ENCODE measurements at regions of chr3 and their contacts with region 1.

Region 1: GRCh38 chr3:132722164-132723024 is at the start of gene NPHP3:
- DNase-seq: peak; percentile 96
- H3K4me3 Mint-ChIP-seq: peak within 1 kb of the TSS; percentile 96
- H3K27ac Mint-ChIP-seq: peak within 1 kb of the TSS; percentile 88
- H3K4me1 Mint-ChIP-seq: peaks cover 30% of the 10 kb centered on the region
- H3K27me3 Mint-ChIP-seq: peaks cover 3% of the 10 kb centered on the region
- total RNA-seq, gene NPHP3: 13.4 and 16.8 TPM in 2 replicates

Region 2: DNA sequence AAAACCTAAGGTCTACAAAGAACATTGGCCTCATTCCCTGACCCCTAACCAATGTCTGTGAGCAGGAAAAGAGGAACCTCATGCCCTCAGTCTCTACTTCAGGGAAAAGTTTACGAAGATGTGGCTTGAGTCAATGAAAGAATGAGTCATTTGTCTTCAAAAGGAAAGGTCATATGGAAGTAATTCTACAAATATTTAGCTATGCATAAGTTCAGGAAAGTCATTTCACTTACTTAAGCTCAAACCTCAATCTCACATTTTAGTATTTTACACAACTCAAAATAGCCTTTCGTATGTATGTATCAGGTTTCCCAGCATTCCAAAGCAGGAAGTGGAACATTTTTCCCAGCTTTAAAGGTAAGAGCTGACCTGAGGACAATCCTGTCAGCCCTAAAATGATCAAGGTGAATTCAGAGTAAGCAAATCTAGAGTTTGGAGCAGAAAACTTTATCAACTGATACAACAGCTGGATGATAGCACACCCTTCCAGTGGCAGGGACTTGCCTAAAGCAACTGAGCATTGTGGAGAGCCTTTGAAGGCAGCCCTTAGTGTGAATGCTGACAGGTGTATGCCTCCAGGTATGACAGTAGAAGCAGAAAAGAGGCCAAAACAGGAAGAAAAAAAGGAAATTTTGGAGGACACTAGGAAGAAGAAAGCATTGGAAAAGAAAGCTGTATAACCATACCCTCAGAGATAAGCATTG is 179.2 kb before region 1 on chr3:
- intact Hi-C with region 1: loop called (anchors 5 kb)
- DNase-seq: no peak
- H3K4me3 Mint-ChIP-seq: peak overlapping the region; percentile 62
- H3K27ac Mint-ChIP-seq: peak overlapping the region; percentile 97
- H3K4me1 Mint-ChIP-seq: peaks cover 33% of the 10 kb centered on the region
- H3K27me3 Mint-ChIP-seq: no peaks in the 10 kb centered on the region

Region 3: DNA sequence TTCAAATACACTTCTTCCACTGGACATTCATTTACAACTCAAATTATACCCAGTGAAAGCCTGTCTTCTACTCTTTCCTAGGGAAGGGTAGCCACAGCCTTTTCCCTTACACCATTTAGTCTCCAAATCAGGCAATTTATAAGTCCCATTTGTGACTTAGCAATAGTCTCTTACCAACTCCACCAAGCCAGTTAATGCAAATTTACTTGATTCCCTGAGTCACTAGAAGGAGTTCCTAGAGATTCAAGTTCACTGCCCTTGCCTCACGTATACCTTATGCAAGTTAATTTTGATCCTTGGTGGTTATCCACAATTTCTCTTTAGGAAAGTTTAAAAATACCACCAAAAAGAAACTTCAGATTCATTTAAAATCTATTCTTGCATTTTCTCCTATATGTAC is 15.9 kb after region 1 on chr3:
- intact Hi-C with region 1: no loop called
- DNase-seq: no peak
- H3K4me3 Mint-ChIP-seq: no peak overlapping the region
- H3K27ac Mint-ChIP-seq: no peak overlapping the region
- H3K4me1 Mint-ChIP-seq: no peaks in the 10 kb centered on the region
- H3K27me3 Mint-ChIP-seq: peaks cover 37% of the 10 kb centered on the region

Region 4: GRCh38 chr3:133040696-133041523 is 318.5 kb after region 1 on chr3:
- intact Hi-C with region 1: loop called (anchors 5 kb)
- DNase-seq: peak; percentile 69
- H3K4me3 Mint-ChIP-seq: no peak overlapping the region
- H3K27ac Mint-ChIP-seq: no peak overlapping the region
- H3K4me1 Mint-ChIP-seq: no peaks in the 10 kb centered on the region
- H3K27me3 Mint-ChIP-seq: peaks cover 35% of the 10 kb centered on the region

Region 5: GRCh38 chr3:133426721-133427120 is 704.3 kb after region 1 on chr3:
- intact Hi-C with region 1: loop called (anchors 1 kb)
- DNase-seq: no peak
- H3K4me3 Mint-ChIP-seq: no peak overlapping the region
- H3K27ac Mint-ChIP-seq: no peak overlapping the region
- H3K4me1 Mint-ChIP-seq: peaks cover 5% of the 10 kb centered on the region
- H3K27me3 Mint-ChIP-seq: no peaks in the 10 kb centered on the region

Region 6: DNA sequence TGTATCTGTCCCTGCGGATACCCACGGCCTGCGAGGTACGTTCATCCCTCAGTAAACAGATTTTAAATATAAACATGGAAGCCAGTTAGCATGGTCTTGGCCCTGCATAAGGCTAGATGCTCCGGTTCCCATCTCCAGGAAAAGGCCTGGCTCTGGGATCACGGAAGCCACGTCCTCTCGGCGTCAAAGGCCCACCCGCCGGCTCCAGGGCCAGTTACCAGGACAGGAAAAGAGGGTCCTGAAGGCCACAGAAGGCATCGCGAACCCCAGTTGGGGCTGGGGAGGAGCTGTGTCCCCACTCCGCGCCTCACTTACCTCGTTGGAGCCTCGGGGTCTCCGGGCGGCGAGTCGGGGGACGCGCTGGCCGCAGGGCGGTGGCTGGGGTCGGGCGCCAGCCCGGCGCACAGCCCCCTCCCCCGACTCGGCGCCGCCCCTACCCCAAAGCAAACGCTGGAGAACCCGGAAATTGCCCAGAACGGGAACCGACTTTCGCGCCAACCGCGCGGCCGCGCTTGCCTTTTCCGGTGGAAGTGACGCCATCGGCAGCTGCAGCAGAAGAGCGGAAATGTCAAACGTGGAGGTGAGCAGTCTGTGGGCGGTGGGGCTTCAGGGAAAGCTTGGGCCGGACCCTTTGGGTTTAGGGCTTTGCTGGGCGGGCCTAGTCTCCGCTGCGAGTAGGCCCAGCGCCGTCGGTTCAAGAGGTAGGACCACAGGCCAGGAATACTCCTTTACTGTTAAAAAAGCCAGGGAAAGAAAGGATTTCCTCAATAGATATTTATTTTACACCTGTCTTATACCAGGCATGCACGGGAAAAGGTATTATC is 939.3 kb after region 1 on chr3 and contains the start of gene TOPBP1:
- intact Hi-C with region 1: loop called (anchors 1 kb)
- DNase-seq: peak; percentile 98
- H3K4me3 Mint-ChIP-seq: peak within 1 kb of the TSS; percentile 86
- H3K27ac Mint-ChIP-seq: peak within 1 kb of the TSS; percentile 94
- H3K4me1 Mint-ChIP-seq: peaks cover 26% of the 10 kb centered on the region
- H3K27me3 Mint-ChIP-seq: no peaks in the 10 kb centered on the region
- total RNA-seq, gene TOPBP1: 92.6 and 97.9 TPM in 2 replicates

Region 7: DNA sequence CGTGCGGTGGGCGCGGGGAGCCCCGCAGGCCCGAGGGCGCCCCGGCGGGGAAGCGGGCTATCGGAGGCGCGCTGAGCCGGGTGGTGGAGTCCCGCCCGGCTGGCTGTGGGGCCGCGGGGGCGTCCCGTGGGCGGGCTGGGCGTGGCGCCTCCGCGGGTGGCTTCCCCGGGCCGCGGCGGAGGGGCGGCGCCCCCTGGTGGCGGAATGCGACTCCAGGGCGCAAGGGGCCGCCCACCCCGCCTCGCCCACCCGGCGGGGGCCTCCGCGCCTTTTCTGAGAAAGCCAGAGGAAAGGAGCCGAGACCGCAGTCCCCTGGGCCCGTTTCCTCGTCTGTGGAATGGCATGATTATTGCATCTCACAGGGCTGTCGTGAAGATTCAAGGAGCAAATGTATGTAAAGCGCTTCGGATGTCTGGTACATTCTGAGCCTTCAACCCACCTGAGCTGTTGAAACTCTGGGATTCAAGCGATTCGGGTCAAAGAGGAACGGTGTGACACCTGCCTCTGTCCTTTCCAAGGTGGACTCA is 1205.2 kb after region 1 on chr3:
- intact Hi-C with region 1: loop called (anchors 5 kb)
- DNase-seq: peak; percentile 92
- H3K4me3 Mint-ChIP-seq: peak overlapping the region; percentile 64
- H3K27ac Mint-ChIP-seq: no peak overlapping the region
- H3K4me1 Mint-ChIP-seq: peaks cover 5% of the 10 kb centered on the region
- H3K27me3 Mint-ChIP-seq: peaks cover 33% of the 10 kb centered on the region